Posterior cingulate gyrus (tissue), 11 donors: ENCODE measurements at regions of chr1 and their contacts with region 1.

Region 1: GRCh38 chr1:226424228-226425003 is 16.5 kb upstream of the PARP1 start:
- DNase-seq: peak in 1 of 10 donors; percentile 21

Region 2: DNA sequence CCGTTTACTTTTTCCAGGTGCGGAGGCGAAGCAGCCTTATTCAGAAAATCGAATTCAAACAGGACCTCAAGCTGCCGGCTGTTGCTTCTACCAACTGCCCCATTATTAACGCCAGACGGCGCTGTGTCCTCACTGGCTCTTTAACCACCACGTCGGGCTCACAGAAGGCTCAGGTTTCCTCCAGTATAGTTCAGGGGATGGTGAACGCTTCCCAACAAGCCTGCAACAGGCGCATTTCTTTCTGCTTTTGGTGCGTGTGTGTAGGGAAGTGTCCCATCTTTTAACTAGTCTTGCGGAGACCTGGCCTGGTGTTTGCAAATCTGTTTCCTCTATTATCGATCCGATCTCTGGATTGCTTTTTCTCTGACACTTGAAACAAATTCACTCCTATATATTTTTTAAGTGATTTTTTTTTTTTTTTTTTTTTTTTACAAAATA is 123.4 kb after region 1 on chr1:
- intact Hi-C with region 1: loop called (anchors 5 kb)
- DNase-seq: peak; percentile 56 to 95 (median 78)

Region 3: DNA sequence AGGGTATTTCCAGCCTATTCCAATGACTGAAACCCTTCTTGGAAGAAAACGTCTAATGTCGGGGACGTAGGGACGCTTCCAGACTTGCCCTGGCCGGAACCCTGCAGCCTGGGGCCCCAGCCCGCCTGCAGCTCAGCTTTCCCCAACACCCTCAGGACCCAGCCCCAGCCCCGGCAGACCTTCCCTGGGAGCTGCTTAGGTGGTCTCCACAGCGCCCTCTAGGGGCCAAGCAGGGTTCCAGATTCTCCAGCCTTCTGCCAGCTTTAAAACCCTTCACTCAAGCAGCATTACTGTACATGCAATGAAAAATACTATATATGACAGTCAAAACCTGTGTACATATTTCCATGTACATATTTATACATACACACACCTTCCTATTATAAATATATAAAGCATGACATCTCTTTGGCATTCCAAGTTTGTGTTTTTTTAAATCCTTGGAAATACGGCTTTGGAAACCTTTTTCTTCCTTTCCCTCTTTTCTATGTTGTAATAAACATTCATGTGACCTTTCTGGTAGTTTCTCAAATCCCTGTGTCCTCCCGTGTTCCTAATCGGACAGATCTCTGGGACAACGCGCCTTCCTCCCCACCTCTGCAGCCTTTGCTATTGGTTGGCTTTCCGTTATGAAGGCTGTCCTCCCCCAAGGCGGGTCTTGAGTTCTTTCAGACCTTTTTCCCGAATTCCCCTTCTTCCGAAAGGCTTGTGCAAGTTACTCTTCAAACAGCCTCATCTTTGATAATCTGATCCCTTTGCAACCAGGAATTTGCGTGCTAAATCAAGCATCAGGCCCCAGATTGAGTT is 184.5 kb after region 1 on chr1:
- intact Hi-C with region 1: loop called (anchors 5 kb)
- DNase-seq: peak in 8 of 10 donors; percentile 69 to 94 (median 76)